Left cardiac atrium (tissue), 4 donors: ENCODE measurements at regions of chr13 and their contacts with region 1.

Region 1: DNA sequence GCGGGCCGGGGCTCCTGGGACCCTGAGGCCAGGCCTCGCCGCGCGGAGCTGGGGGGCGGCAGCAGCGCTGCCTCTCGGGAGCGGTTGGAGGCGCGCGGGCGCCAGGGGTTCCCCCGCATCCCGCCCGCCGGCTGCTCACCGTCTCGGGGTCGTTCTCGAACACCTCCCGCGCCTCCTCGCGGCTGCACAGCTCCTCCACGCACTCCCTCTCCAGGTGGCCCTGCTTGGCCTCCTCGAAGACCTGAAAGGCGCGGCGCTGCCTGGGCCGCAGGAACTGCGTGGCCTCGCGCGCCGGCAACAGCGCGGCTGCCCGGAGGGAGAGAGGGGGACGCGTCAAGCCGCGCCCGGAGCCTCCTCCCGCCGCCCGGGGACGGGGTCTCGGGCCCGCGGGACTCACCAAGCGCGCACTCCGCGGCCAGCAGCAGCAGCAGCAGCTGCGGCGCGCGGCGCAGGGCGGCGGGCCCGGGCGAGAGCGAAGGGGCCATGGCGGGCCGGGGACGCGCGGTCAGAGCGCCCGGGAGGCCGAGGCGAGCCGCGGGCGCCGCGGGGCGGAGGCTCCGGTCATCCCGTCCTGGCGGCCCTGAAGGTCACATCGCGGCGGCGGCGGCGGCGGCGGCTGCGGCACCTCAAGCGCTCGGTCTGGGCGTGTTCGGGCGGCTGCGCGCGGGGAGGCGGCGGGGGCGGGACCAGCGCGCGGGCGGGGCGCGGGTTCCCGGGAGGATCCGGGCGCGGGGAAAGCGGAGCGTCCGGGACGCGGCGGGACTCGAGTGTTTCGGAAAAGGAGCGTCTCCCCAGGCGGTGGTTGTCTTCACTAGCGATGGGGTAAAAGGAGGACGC is at the start of gene GAS6:
- DNase-seq: peak; percentile 72
- ATAC-seq: peak; percentile 56 to 72
- total RNA-seq, gene GAS6: 165 to 175 TPM

Region 2: GRCh38 chr13:113904411-113904810 is 40.8 kb after region 1 on chr13:
- intact Hi-C with region 1: loop called in 1 of 2 experiments (anchors 5 kb)
- DNase-seq: peak; percentile 77
- ATAC-seq: peak; percentile 80 to 88

Region 3: DNA sequence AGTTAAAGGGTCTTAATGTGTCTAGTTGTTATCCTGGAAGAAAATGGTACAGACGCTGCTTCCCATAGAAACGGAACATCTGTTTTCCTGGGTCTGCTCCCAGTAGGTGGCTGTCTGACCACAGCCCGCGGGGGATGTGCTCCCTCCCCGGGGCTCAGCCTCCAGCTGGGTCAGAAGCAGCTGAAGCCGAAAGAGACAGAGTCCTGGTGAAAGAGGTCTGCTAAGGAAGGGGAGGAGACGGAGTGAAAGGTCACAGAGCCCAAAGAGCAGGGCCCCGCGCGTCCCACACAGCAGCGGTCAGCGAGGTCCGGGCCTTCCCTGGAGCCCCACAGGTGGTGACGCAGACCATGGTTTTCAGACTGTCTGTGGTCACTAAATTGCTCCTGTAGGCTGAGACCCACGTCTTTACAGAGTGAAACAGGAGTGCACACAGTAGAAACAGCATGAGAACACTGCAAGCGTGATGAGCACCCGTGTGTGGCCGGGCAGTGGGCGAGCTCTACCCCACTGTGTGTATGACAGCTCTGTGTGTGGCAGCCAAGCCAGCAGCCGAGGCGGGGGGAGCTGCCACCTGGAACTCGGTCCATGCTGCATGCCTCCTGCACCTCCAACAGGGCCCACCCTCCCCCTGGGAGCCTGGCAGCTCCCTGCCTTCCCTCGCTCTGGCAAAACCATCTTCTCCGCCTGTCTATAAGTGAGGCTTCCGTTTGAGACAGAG is 162.2 kb after region 1 on chr13:
- intact Hi-C with region 1: no loop called
- DNase-seq: peak; percentile 25
- ATAC-seq: peak; percentile 70 to 81